Adrenal gland (tissue), 19 donors: ENCODE measurements at regions of chr12 and their contacts with region 1.

Region 1: DNA sequence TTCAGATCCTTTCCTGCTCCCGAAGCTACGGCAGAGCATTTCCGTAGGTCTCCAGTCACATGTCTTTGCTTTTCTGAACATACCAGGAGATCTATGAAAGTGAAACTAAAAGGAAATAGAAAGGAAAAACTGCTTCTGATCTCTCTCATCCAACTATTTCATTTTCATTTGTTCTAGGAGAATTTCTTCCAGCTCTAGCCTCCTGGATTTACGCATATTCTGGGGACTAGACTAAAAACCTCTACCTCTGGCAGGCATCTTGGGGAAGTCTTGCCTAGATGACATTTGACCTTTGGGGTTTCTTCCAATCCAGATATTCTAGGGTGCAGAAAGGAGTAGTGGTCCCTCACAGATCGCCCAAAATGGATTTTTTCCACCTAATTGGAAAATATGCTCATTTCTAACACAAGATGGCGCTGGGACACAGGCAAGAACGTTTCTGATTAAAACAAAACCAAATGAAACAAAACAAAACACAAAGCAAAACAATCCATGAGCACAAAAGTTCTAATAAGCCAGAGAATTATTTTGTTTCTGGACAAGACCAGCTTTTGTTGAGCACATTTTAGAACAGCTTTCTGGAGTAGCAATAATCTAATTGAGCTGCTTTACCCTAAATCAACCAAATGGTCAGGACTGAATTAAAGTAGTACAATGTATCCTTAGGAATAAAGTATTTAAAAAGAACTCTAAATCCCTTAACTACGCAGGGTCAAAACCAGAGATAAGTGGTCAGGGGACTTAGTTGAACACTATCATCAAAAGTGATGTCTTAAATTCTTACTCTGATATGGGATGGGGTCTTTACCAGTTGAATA is 12.3 kb upstream of the PARP11 start:
- DNase-seq: peak in 5 of 7 donors; percentile 28 to 65 (median 55)
- H3K4me3 ChIP-seq: peak overlapping the region in 2 of 4 donors; percentile 17 to 49
- H3K27ac ChIP-seq: peak overlapping the region in 4 of 5 donors; percentile 36 to 88 (median 76)
- H3K4me1 ChIP-seq: peaks cover 4 to 5% of the 10 kb centered on the region in 2 donors
- H3K27me3 ChIP-seq: no peaks in the 10 kb centered on the region
- CTCF ChIP-seq: peak; percentile 76 to 97 (median 89)
- POLR2A ChIP-seq: peak in 1 of 2 donors; percentile 25

Region 2: DNA sequence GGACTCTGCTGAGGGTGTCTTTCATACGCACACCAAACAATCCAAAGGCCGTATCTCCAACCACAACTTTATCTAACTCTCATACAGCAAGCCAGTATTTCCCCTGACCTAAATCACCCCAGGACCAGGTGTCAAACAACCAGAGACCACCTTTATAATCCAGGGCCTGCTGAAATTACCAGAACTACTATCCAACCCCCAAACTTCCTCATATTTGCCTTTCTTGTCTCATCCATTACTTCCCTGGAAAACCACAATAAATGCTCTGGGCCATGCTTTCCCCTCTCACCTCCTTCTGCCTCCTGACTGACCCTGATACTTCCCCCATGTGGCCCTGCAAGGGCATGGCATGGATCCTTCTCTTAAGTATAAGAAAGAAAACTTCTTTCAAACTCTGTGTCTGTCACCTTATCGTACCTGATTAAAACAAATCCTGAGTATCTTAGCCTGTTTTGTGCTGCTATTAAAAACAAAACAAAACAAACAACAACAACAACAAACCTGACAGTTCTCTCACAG is 87.9 kb before region 1 on chr12:
- intact Hi-C with region 1: no loop called
- DNase-seq: no peak
- H3K4me3 ChIP-seq: no peak overlapping the region
- H3K27ac ChIP-seq: no peak overlapping the region
- H3K4me1 ChIP-seq: peaks cover 0 to 8% of the 10 kb centered on the region in 2 donors
- H3K27me3 ChIP-seq: no peaks in the 10 kb centered on the region
- CTCF ChIP-seq: no peak
- POLR2A ChIP-seq: no peak

Region 3: GRCh38 chr12:3832738-3833137 is 52.7 kb before region 1 on chr12:
- intact Hi-C with region 1: no loop called
- DNase-seq: no peak
- H3K4me3 ChIP-seq: no peak overlapping the region
- H3K27ac ChIP-seq: peak overlapping the region in 3 of 5 donors; percentile 23 to 68 (median 67)
- H3K4me1 ChIP-seq: peaks cover 6 to 29% of the 10 kb centered on the region in 2 donors
- H3K27me3 ChIP-seq: no peaks in the 10 kb centered on the region
- CTCF ChIP-seq: no peak
- POLR2A ChIP-seq: no peak

Region 4: GRCh38 chr12:3998968-3999826 is 113.7 kb after region 1 on chr12:
- intact Hi-C with region 1: loop called in 1 of 2 experiments (anchors 5 kb)
- DNase-seq: peak in 1 of 7 donors; percentile 57
- H3K4me3 ChIP-seq: no peak overlapping the region
- H3K27ac ChIP-seq: no peak overlapping the region
- H3K4me1 ChIP-seq: no peaks in the 10 kb centered on the region
- H3K27me3 ChIP-seq: no peaks in the 10 kb centered on the region
- CTCF ChIP-seq: no peak
- POLR2A ChIP-seq: no peak

Region 5: GRCh38 chr12:4037747-4038312 is 152.3 kb after region 1 on chr12:
- intact Hi-C with region 1: loop called (anchors 5 kb)
- DNase-seq: peak; percentile 48 to 85 (median 72)
- H3K4me3 ChIP-seq: no peak overlapping the region
- H3K27ac ChIP-seq: no peak overlapping the region
- H3K4me1 ChIP-seq: peaks cover 9 to 12% of the 10 kb centered on the region in 2 donors
- H3K27me3 ChIP-seq: no peaks in the 10 kb centered on the region
- CTCF ChIP-seq: peak; percentile 56 to 91 (median 86)
- POLR2A ChIP-seq: no peak

Region 6: DNA sequence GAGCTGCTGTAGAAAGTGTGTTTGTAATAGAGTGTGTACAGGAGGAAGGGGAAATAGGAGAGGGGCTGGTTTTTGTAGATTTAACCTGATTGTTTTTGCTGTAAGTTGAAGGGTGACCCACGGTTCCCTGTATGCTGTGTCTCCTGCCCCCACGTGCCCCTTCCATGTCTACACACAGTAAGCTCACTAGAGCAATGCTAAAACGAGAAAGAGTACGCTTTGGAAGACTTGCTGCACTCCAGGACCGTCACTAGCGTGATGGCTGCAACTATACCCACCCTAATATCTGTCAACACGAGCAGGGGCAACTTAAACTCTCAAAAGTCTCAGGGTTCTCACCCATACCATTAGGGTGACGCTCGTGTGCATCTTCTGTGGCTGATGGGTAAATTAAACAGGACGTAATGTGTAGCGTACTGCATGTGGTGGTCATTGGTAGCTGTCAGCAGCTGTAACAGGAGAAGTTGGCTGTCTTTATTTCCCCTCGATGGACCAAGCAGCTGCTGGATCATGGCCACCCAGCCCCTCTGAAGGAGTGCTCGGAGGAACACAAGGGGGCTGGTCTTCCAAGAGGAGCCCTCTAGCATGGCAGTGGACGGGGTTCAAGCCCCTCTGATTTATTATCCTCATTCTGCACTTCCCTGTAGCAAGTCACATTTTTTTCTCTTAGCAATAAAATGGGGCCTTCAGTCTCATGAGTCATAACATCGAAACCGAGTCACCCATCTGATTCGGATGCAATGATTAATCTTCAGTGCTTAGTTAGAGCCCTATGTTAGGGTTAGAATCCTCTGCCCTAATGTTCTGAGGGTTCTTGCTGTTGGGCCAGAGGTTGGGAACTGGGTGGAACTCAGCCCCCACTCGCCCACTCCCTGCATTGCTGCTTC is 402.1 kb after region 1 on chr12:
- intact Hi-C with region 1: loop called in 1 of 2 experiments (anchors 10 kb)
- DNase-seq: peak in 2 of 7 donors; percentile 25 to 26
- H3K4me3 ChIP-seq: no peak overlapping the region
- H3K27ac ChIP-seq: peak overlapping the region in 3 of 5 donors; percentile 51 to 85 (median 75)
- H3K4me1 ChIP-seq: peaks cover 41 to 54% of the 10 kb centered on the region in 2 donors
- H3K27me3 ChIP-seq: no peaks in the 10 kb centered on the region
- CTCF ChIP-seq: no peak
- POLR2A ChIP-seq: no peak